ENCODE measurements at regions of chr19 and their contacts with region 1.

Region 1: GRCh38 chr19:53158119-53158656 is 665 bp downstream of the ZNF347 start:
- DNase-seq: no peak
- ATAC-seq: peak; percentile 28

Region 2: DNA sequence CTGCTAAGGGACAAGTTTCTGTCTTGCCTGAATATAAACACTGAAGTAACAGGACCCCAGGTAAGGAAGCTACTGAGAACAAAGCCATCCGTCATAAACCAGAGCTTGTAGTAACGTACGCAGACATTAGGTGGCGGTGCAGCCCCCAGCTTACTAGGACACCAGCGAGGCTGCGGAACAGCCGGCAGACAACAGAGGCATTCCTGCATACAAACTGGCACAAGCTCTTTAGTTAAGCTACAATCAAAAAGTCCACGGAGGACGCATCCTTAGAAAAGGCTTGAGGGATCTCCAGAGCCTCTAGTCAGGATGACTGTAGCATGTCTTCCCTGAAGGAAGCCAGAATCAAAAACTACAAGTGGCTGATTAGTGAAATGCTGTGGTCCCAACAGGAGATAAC is 81.2 kb before region 1 on chr19:
- intact Hi-C with region 1: loop called (anchors 10 kb)
- DNase-seq: peak; percentile 67
- ATAC-seq: peak; percentile 76

Region 3: DNA sequence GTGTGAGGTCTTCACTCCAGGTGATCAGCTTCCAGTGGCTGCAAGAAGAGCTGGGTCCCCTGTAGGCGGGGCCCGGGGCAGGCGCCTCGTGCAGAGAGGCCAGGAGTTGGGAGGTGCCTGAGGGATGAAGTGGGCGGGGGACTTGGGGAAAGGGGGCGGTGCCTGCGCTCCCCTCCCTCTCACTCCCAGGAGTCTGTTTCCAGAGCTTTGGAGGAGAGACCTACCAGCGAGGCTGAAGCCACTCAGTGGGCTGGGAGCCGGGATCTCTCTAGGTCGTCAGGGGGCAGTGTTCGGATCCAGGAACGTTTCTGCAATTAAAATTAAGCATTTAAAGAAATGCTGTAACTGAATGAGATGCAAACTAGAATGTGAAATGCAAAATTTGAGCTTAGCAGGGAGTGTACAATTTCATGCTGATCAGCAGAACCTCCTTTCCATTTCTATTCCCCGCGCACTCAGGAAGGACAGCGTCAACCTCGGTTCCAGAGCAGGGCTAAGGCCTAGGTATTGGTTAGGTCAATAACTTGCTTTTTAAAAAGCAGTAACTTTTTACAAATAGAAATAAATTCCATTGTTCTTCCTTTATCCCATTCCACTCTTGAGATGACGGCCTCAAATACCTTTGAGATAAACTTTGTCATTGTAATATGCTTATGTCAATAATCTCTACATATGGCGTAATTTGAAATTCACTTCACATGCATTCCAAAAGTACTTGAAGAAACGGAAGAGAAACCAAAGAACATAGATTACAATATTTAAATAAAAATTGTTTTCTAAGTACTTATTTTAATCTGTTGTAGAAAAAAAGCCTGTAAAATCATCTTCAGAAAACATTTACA is 66.6 kb before region 1 on chr19:
- intact Hi-C with region 1: no loop called
- DNase-seq: no peak
- ATAC-seq: no peak

Region 4: GRCh38 chr19:53132141-53132991 is 25.8 kb before region 1 on chr19 and contains the start of gene ZNF415:
- intact Hi-C with region 1: loop called (anchors 2 kb)
- DNase-seq: peak; percentile 88
- ATAC-seq: peak; percentile 89
- total RNA-seq, gene ZNF415: 18.6 TPM